ENCODE measurements at regions of chr17 and their contacts with region 1.

Region 1: GRCh38 chr17:8189711-8190477 is at the start of gene BORCS6:
- DNase-seq: peak; percentile 84 to 99 (median 92)
- ATAC-seq: peak; percentile 68
- H3K4me3 ChIP-seq: peak within 1 kb of the TSS; percentile 93
- H3K4me3 Mint-ChIP-seq: no peak within 1 kb of the TSS
- H3K27ac ChIP-seq: peak within 1 kb of the TSS; percentile 83
- H3K27ac Mint-ChIP-seq: peak within 1 kb of the TSS; percentile 85
- H3K4me1 ChIP-seq: peaks cover 77% of the 10 kb centered on the region
- H3K4me1 Mint-ChIP-seq: peaks cover 12% of the 10 kb centered on the region
- H3K27me3 ChIP-seq: no peaks in the 10 kb centered on the region
- H3K27me3 Mint-ChIP-seq: no peaks in the 10 kb centered on the region
- CTCF ChIP-seq: no peak
- total RNA-seq, gene BORCS6: 6.1 to 6.4 TPM

Region 2: GRCh38 chr17:7444682-7445618 is 744.9 kb before region 1 on chr17 and contains the start of gene CHRNB1:
- CTCF ChIA-PET with region 1: no interaction called
- POLR2A ChIA-PET with region 1: no interaction called
- intact Hi-C with region 1: no loop called
- DNase-seq: peak in 3 of 14 experiments; percentile 15 to 56 (median 43)
- ATAC-seq: peak; percentile 11
- H3K4me3 ChIP-seq: peak within 1 kb of the TSS; percentile 37
- H3K4me3 Mint-ChIP-seq: peak within 1 kb of the TSS; percentile 59
- H3K27ac ChIP-seq: no peak within 1 kb of the TSS
- H3K27ac Mint-ChIP-seq: no peak within 1 kb of the TSS
- H3K4me1 ChIP-seq: peaks cover 37% of the 10 kb centered on the region
- H3K4me1 Mint-ChIP-seq: peaks cover 29% of the 10 kb centered on the region
- H3K27me3 ChIP-seq: peaks cover 67 to 73% of the 10 kb centered on the region in 2 experiments
- H3K27me3 Mint-ChIP-seq: peaks cover 72% of the 10 kb centered on the region
- CTCF ChIP-seq: no peak
- total RNA-seq, gene CHRNB1: 1.6 to 2.2 TPM

Region 3: GRCh38 chr17:8156246-8156992 is 33.5 kb before region 1 on chr17:
- CTCF ChIA-PET with region 1: interaction called, 12 read pairs
- POLR2A ChIA-PET with region 1: interaction called, 233 read pairs
- intact Hi-C with region 1: loop called in 1 of 2 experiments (anchors 2 kb)
- DNase-seq: peak; percentile 99 to 100 (median 100)
- ATAC-seq: peak; percentile 70
- H3K4me3 ChIP-seq: peak overlapping the region; percentile 86
- H3K4me3 Mint-ChIP-seq: no peak overlapping the region
- H3K27ac ChIP-seq: peak overlapping the region; percentile 99 to 100
- H3K27ac Mint-ChIP-seq: no peak overlapping the region
- H3K4me1 ChIP-seq: peaks cover 88% of the 10 kb centered on the region
- H3K4me1 Mint-ChIP-seq: peaks cover 73% of the 10 kb centered on the region
- H3K27me3 ChIP-seq: no peaks in the 10 kb centered on the region
- H3K27me3 Mint-ChIP-seq: peaks cover 3% of the 10 kb centered on the region
- CTCF ChIP-seq: no peak

Region 4: DNA sequence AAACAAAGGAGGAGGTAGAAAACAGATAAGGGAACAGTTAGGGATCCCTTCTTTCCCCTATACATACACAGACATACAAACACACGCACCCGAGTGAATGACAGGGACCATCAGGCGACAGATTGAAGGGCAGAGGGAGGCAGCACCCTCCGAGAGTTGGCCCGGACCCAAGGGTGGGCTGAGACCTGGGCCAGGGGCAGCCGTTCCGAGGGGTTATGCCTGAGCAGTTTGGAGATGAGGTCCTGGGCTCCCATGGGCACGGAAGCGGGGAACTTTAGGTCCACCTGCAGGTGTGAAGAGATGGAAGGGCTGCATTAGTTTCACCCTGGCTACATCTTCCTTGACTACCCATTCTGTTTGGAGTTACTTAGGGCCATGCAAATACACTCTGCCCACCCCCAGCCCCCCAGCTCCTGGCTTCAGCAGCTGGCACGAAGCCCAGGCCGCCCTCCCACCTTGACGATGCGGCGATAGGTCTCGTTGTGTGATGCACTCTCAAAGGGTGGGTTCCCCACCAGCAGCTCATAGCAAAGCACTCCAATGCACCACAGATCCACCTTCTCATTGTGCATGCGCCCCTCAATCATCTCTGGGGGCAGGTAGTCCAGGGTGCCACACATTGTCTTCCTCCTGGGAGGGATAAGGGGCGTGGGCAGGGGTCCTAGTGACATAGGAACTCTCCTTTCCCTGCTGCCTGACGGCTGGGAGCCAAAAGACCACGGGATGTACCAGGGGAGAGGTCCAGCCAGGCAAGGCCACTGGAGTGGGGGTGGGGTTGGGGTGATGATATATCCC is 15.1 kb after region 1 on chr17:
- CTCF ChIA-PET with region 1: interaction called, 4 read pairs
- POLR2A ChIA-PET with region 1: interaction called, 20 read pairs
- intact Hi-C with region 1: loop called (anchors 1 to 2 kb)
- DNase-seq: no peak
- ATAC-seq: no peak
- H3K4me3 ChIP-seq: no peak overlapping the region
- H3K4me3 Mint-ChIP-seq: no peak overlapping the region
- H3K27ac ChIP-seq: no peak overlapping the region
- H3K27ac Mint-ChIP-seq: no peak overlapping the region
- H3K4me1 ChIP-seq: peaks cover 8% of the 10 kb centered on the region
- H3K4me1 Mint-ChIP-seq: peaks cover 7% of the 10 kb centered on the region
- H3K27me3 ChIP-seq: no peaks in the 10 kb centered on the region
- H3K27me3 Mint-ChIP-seq: no peaks in the 10 kb centered on the region
- CTCF ChIP-seq: no peak

Region 5: DNA sequence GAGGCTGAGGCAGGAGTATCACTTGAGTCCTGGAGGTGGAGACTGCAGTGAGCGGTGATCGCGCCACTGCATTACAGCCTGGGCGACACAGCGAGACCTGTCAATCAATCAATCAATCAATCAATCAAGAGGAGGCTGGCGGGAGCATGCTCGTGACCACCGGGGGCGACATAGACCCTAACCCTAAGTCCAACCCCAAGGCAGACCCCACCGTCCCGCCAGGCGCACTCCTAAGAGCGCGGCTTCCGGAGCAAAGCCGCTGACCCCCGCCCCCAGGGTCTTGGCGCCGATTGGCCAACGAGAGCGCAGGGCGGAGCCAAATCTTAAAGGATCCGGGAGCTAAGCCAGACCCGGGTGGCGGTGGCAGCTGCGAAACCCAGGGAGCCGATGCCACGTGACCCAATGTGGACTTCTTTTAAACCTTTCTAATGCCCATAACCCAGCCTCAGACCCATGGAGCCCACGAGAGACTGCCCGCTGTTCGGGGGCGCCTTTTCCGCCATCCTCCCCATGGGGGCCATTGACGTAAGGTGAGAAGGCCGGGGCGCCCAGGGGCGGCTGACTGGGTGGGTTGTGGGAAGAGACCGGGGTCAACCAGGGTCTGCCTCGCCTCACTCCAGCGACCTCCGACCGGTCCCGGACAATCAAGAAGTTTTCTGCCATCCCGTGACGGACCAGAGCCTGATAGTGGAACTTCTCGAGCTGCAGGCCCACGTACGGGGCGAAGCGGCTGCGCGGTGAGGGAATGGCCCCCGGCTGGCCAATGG is 98.6 kb after region 1 on chr17 and contains the start of gene RANGRF:
- CTCF ChIA-PET with region 1: no interaction called
- POLR2A ChIA-PET with region 1: interaction called, 13 read pairs
- intact Hi-C with region 1: loop called in 1 of 2 experiments (anchors 5 kb)
- DNase-seq: peak; percentile 60 to 89 (median 75)
- ATAC-seq: peak; percentile 96
- H3K4me3 ChIP-seq: peak within 1 kb of the TSS; percentile 98
- H3K4me3 Mint-ChIP-seq: peak within 1 kb of the TSS; percentile 98
- H3K27ac ChIP-seq: peak within 1 kb of the TSS; percentile 76 to 94
- H3K27ac Mint-ChIP-seq: peak within 1 kb of the TSS; percentile 95
- H3K4me1 ChIP-seq: peaks cover 45% of the 10 kb centered on the region
- H3K4me1 Mint-ChIP-seq: peaks cover 50% of the 10 kb centered on the region
- H3K27me3 ChIP-seq: no peaks in the 10 kb centered on the region
- H3K27me3 Mint-ChIP-seq: no peaks in the 10 kb centered on the region
- CTCF ChIP-seq: no peak
- total RNA-seq, gene RANGRF: 23.1 to 24.6 TPM